ENCODE measurements at regions of chr17 and their contacts with region 1.

Region 1: DNA sequence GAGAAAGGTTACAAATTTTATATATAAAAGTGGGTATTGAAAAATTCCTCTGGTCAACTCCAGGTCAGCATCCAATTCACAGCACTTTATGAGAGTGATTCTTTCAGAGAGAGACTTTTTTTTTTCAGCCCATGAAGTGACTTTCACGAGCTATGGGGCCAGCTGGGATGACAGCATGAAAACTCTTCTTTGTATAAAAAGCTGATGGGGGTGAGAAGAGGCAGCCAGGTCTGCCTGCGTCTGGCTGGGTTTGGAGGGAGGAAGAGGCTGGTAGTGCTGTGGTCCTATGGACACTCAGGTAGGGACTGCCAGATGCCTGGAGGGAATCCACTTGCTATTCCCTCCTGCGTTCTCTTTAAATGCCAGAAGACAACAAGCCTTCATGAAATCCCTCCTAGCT is 250.6 kb downstream of the UTP18 start:
- DNase-seq: no peak

Region 2: DNA sequence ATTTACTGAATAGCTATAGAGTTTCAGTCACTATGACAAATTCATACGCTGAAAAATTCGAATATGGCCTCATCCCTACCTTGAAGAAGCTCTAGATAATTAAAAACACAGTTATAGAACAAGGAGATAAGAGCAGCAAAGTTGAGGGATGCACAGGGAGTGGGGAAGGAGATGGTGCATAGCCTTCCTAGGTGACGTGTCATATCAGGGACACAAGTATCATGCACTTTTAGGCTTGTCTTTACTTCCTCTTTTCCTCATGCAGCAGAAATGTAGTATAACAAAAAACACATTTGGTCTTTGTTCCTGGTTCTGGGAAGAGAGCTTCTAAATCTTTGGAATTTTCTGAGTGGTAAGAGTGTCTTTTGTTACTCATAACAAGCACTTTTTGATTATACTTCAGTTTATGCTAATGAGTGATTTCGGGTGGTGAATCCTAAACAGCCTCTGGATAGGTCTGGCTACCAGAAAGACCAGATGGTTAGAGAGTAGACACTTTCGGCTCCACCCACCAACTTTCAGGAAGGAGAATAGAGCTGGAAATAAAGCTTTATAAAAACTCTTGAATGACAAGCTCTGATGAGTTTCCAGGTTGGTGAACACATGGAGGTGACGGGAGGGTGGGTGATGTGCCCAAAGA is 90.8 kb after region 1 on chr17:
- intact Hi-C with region 1: no loop called
- DNase-seq: no peak

Region 3: GRCh38 chr17:52071712-52072111 is 560.8 kb after region 1 on chr17:
- intact Hi-C with region 1: loop called in 1 of 2 experiments (anchors 5 kb)
- DNase-seq: no peak